ENCODE measurements at regions of chr9 and their contacts with region 1.

Region 1: DNA sequence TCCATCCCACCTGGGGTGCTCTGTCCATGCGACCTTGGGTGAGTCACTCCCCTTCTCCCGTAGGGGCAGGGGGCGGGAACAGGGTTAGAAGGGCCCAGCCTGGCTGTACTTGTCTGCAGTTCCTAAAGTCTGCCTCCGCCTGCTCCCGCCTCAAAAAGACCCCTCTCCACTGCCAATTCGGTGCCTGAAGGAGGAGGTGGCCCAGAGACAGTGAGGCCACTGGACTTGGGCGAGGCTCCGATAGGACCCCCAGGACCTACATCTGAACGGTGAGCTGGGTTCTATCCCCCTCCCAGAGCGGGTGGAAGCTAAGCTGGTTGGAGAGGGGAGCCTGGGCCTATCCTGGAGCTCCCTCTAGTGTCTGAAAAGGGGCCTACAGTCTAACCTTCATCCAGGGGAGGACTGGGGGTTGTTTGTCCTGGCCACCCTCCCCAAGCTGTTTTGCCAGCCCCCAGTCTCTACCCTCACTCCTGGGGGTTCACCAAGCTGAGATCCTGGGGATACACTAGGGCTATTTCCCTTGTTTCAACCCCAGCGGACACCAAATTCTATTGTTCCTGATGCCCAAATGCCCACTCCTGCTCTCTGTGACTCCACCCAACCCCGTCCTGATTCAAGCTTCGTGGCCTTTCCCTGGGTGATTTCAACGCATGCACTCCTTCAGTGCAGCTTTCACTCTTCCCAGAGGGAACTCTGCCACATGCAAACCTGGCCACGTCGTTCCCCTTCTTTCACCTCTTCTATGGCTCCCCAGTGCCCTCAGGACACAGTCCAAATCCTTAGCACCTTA is 6.1 kb upstream of the CRB2 start:
- DNase-seq: peak; percentile 76
- H3K4me3 Mint-ChIP-seq: no peak overlapping the region
- H3K27ac Mint-ChIP-seq: no peak overlapping the region
- H3K4me1 Mint-ChIP-seq: no peaks in the 10 kb centered on the region
- H3K27me3 Mint-ChIP-seq: peaks cover 9% of the 10 kb centered on the region

Region 2: DNA sequence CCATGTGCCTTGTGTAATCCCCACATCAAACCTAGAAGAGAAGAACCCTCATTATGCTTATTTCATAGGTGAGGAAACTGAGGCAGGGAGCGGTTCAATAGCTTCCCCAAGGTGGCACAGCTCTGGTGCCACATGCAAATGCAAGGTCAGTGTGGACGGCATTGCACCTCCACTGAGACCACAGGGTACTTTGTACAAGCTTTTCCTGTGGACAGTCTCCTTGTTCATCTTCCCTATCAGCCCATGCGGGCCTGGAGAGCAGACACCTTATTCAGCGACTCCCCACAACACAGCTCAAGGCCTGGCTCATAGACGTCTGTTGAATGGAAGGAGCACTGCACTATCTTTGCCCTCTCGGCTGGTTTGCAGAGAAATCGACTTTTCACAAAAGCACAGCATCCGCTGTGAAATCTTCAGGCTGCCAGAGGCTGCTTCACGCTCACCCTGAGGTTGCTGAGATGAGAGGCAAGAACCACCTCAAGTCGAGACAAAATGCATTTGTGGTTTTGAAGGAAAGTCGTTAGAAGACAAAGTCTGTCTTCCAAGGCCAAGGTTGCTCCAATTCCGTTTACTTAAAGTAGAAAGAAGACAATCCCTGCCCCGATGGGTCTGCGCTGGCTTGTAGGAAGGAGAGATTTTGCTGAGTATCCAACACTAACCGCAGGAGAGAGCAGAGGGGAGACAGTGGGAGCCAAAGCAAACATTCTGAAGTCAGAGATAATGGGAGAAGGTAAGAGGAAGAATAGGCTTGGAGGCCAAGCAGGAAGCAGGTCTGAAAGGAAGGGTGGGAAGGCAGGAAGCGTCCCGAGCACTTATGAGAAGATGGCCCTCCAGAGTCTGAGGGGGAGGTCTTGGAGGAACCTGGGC is 47.3 kb before region 1 on chr9:
- CTCF ChIA-PET with region 1: no interaction called
- POLR2A ChIA-PET with region 1: no interaction called
- DNase-seq: peak; percentile 26
- H3K4me3 Mint-ChIP-seq: no peak overlapping the region
- H3K27ac Mint-ChIP-seq: peak overlapping the region; percentile 39
- H3K4me1 Mint-ChIP-seq: peaks cover 35% of the 10 kb centered on the region
- H3K27me3 Mint-ChIP-seq: no peaks in the 10 kb centered on the region

Region 3: GRCh38 chr9:123338710-123339665 is 10.9 kb before region 1 on chr9:
- CTCF ChIA-PET with region 1: interaction called, 19 read pairs
- POLR2A ChIA-PET with region 1: no interaction called
- DNase-seq: peak; percentile 47
- H3K4me3 Mint-ChIP-seq: peak overlapping the region; percentile 63
- H3K27ac Mint-ChIP-seq: peak overlapping the region; percentile 90
- H3K4me1 Mint-ChIP-seq: peaks cover 32% of the 10 kb centered on the region
- H3K27me3 Mint-ChIP-seq: no peaks in the 10 kb centered on the region

Region 4: DNA sequence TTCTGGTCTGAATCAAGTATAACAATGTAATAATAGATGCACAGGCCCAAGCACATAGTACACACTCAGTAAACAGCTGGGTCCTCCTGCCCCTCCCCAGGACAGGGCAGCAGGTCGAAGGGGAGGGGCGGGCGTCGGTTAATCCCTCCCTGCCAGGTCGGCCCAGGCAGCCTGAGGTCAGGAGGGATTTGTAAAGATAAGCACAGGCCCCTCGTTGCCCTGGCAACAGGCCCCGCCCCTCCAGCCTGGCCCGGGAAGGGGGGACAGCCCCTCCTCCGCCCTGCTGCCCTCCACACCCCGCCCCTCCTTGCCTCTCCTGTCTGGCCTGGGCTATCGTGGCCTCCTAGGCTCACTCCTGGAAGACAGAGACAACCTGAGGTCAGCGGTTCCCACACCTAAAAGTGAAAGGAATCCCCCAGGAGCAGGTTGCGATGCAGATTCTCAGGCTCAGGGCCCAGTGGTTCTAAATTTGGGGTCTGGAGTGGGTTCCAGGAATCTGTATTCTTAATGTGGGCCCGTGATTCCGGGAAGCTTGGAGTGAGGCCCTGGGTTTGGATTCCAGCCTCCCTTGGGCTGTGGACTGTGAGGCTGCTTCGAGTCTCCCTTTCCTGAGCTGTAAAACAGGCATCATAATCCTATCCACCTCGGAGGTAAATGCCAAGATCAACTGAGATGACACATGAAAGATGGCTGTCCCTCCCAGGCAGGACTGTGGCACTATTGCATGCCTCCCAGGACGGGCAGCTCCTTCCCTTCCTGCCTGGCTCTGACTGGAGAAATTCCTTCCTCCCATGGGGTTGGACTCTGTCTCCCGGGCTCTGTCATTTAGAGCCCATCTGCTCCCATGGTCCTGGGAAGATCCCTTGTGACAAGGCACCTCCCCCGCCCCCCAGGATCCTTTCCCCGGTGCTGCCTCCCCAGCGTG is 10.5 kb after region 1 on chr9:
- CTCF ChIA-PET with region 1: interaction called, 10 read pairs
- POLR2A ChIA-PET with region 1: no interaction called
- DNase-seq: peak; percentile 55
- H3K4me3 Mint-ChIP-seq: no peak overlapping the region
- H3K27ac Mint-ChIP-seq: no peak overlapping the region
- H3K4me1 Mint-ChIP-seq: peaks cover 26% of the 10 kb centered on the region
- H3K27me3 Mint-ChIP-seq: peaks cover 3% of the 10 kb centered on the region